PC-9 (cell line): ENCODE measurements at regions of chr3 and their contacts with region 1.

Region 1: GRCh38 chr3:136908297-136908696 is 46.3 kb downstream of the NCK1 start:
- DNase-seq: no peak
- H3K4me3 ChIP-seq: no peak overlapping the region
- H3K27ac ChIP-seq: no peak overlapping the region
- H3K4me1 ChIP-seq: no peaks in the 10 kb centered on the region
- H3K27me3 ChIP-seq: no peaks in the 10 kb centered on the region
- CTCF ChIP-seq: no peak

Region 2: DNA sequence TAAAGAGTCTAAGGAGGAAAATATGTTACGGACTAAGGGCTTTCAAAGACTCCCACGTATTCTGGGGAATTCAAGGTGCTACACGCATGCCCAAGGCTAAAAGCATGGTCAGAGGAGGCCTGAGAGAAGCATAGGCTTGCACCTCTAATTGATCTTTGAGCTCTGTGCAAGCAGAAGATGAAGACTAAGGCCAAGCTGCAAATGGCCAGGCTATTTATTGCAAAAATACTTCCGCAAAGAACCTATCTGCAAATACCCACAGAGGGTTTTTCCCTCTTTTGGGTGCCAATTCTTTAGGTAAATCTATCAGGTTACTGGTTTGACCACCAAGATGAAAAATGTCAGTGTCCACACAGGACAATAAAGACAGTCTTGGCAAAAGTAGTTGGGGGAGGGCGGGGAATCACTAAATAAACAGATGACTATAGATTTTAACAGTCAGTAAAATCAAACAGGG is 275.6 kb before region 1 on chr3:
- CTCF ChIA-PET with region 1: no interaction called
- POLR2A ChIA-PET with region 1: no interaction called
- intact Hi-C with region 1: no loop called
- DNase-seq: peak in 1 of 2 experiments; percentile 53
- H3K4me3 ChIP-seq: no peak overlapping the region
- H3K27ac ChIP-seq: no peak overlapping the region
- H3K4me1 ChIP-seq: peaks cover 10% of the 10 kb centered on the region
- H3K27me3 ChIP-seq: no peaks in the 10 kb centered on the region
- CTCF ChIP-seq: no peak

Region 3: DNA sequence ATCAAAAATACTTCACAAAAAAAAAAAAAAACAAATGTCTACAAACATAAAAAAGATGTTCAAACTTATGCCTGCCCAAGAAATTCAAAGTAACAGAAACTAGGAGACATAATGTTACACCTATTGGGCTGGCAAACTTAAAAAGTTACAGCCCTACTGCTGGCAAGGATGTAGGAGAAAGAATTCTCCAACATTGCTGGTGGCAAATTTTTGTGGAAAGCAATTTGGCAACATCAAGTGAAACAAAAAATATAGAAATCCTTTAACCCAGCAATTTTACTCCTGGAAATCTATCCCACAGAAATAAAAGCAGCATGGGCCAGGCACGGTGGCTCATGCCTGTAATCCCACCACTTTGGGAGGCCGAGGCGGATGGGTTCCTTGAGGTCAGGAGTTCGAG is 229.3 kb before region 1 on chr3:
- CTCF ChIA-PET with region 1: no interaction called
- POLR2A ChIA-PET with region 1: interaction called, 10 read pairs
- intact Hi-C with region 1: no loop called
- DNase-seq: no peak
- H3K4me3 ChIP-seq: no peak overlapping the region
- H3K27ac ChIP-seq: no peak overlapping the region
- H3K4me1 ChIP-seq: no peaks in the 10 kb centered on the region
- H3K27me3 ChIP-seq: no peaks in the 10 kb centered on the region
- CTCF ChIP-seq: no peak

Region 4: GRCh38 chr3:136772709-136773108 is 135.6 kb before region 1 on chr3:
- CTCF ChIA-PET with region 1: no interaction called
- POLR2A ChIA-PET with region 1: no interaction called
- intact Hi-C with region 1: no loop called
- DNase-seq: no peak
- H3K4me3 ChIP-seq: no peak overlapping the region
- H3K27ac ChIP-seq: no peak overlapping the region
- H3K4me1 ChIP-seq: no peaks in the 10 kb centered on the region
- H3K27me3 ChIP-seq: no peaks in the 10 kb centered on the region
- CTCF ChIP-seq: no peak

Region 5: GRCh38 chr3:137820366-137820765 is 912.1 kb after region 1 on chr3:
- CTCF ChIA-PET with region 1: no interaction called
- POLR2A ChIA-PET with region 1: interaction called, 12 read pairs
- intact Hi-C with region 1: no loop called
- DNase-seq: no peak
- H3K4me3 ChIP-seq: no peak overlapping the region
- H3K27ac ChIP-seq: no peak overlapping the region
- H3K4me1 ChIP-seq: no peaks in the 10 kb centered on the region
- H3K27me3 ChIP-seq: peaks cover 2% of the 10 kb centered on the region; the same call in 1 of the 2 replicates
- CTCF ChIP-seq: no peak